Activated CD4-positive, alpha-beta memory T cell treated with anti-CD3 and anti-CD28 coated beads, Interleukin-2, amount 10 ng/mL, durations not matched to agents 7 days and 5 days (primary cell): ENCODE measurements at regions of chr13 and their contacts with region 1.

Region 1: DNA sequence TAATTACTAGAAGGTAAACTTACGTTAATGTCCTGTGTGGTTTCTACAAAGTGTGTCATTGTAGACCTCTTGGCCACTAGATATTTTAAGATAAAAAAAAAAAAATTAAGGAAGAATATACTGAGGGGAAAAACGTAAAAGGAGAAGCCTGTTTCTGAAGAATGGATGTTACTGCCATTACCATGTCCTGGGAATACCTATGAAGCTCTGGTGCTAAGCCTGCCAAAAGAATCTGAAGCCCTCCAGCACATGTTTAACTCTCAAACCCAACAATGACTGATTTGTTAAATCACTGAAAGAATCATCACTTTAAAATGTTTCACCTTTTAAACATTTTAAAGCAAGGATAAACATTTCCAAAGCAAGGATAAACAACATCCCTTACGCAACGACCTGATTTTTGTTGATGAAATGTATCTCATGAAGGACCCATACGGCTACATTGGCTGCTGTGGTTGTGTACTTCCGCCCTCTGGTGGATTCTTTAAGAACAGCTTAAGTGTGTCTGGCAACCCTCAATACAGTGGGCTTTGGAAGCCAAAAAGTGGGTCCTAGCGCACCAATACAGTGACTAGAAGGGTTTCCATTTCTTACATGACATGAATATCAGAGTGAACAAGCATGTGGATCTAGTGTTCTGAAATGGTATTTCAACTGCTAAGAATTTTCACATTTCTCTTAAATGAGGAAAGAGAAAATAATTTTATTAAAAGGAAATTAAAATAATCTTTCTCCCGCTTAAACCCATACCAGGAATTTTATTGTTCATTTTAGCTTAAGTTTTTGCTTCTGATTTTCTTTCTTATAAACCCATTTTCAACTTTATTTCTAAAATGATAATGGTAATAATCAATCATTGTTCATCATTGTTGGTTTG is 74.5 kb upstream of the RAP2A start:
- DNase-seq: peak; percentile 50
- H3K4me3 Mint-ChIP-seq: no peak overlapping the region
- H3K27ac Mint-ChIP-seq: no peak overlapping the region
- H3K4me1 Mint-ChIP-seq: no peaks in the 10 kb centered on the region
- H3K27me3 Mint-ChIP-seq: no peaks in the 10 kb centered on the region

Region 2: GRCh38 chr13:97344265-97345175 is 14.9 kb before region 1 on chr13:
- CTCF ChIA-PET with region 1: interaction called, 16 read pairs
- POLR2A ChIA-PET with region 1: no interaction called
- DNase-seq: peak; percentile 59
- H3K4me3 Mint-ChIP-seq: no peak overlapping the region
- H3K27ac Mint-ChIP-seq: no peak overlapping the region
- H3K4me1 Mint-ChIP-seq: peaks cover 10% of the 10 kb centered on the region
- H3K27me3 Mint-ChIP-seq: no peaks in the 10 kb centered on the region